PC-9 (cell line): ENCODE measurements at regions of chr9 and their contacts with region 1.

Region 1: DNA sequence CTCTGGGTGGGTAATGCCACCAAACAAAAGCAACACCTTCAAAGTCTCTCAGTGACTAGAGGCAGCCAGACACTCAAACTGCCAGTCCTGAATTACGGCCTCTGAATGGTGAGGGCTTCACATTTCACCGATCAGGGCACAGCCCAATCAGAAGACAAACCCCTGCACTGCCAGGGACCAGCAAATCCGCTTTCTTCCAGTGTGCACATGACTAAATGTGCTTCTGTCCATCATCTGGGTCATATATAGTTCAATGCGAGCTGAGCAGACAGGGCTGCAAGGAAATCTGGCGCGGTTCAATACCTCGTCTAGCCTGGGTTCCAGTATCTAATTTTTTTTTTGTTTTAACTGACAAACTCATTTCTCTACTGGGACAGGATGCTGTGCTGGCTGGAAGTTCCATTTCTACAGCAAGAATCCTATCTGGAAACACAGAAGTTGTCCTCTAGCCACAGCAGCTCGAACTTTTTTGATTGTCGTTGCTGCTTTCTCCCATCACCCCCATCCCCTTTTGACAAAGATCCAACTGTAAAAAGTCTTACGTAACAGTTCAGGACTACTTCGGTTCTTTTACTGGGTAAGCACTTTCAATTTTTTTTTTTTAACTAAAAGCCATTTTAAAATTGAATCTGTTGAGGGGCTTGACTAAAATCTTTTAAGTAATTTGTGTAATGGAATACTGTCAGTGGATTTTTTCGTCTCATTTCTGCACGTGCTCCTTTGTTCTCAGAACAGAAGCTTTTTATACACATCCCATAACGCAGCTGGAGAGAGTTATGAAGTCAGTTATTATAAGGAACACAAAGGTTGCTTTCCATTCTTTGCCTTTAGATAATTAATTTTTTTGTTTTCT is 112.7 kb downstream of the NR6A1 start:
- DNase-seq: peak; percentile 87 to 94
- H3K4me3 ChIP-seq: peak overlapping the region; percentile 70
- H3K27ac ChIP-seq: peak overlapping the region; percentile 94
- H3K4me1 ChIP-seq: peaks cover 41% of the 10 kb centered on the region
- H3K27me3 ChIP-seq: no peaks in the 10 kb centered on the region
- CTCF ChIP-seq: no peak

Region 2: GRCh38 chr9:124532897-124533296 is 125.5 kb before region 1 on chr9:
- CTCF ChIA-PET with region 1: no interaction called
- POLR2A ChIA-PET with region 1: no interaction called
- intact Hi-C with region 1: no loop called
- DNase-seq: no peak
- H3K4me3 ChIP-seq: no peak overlapping the region
- H3K27ac ChIP-seq: no peak overlapping the region
- H3K4me1 ChIP-seq: peaks cover 14% of the 10 kb centered on the region
- H3K27me3 ChIP-seq: no peaks in the 10 kb centered on the region
- CTCF ChIP-seq: no peak

Region 3: GRCh38 chr9:124551472-124552272 is 106.7 kb before region 1 on chr9:
- CTCF ChIA-PET with region 1: interaction called, 3 read pairs
- POLR2A ChIA-PET with region 1: no interaction called
- intact Hi-C with region 1: loop called (anchors 5 kb)
- DNase-seq: peak; percentile 71 to 78
- H3K4me3 ChIP-seq: no peak overlapping the region
- H3K27ac ChIP-seq: peak overlapping the region; percentile 45
- H3K4me1 ChIP-seq: peaks cover 23% of the 10 kb centered on the region
- H3K27me3 ChIP-seq: no peaks in the 10 kb centered on the region
- CTCF ChIP-seq: peak; percentile 78

Region 4: GRCh38 chr9:124580186-124580585 is 78.2 kb before region 1 on chr9:
- CTCF ChIA-PET with region 1: no interaction called
- POLR2A ChIA-PET with region 1: no interaction called
- intact Hi-C with region 1: no loop called
- DNase-seq: no peak
- H3K4me3 ChIP-seq: no peak overlapping the region
- H3K27ac ChIP-seq: no peak overlapping the region
- H3K4me1 ChIP-seq: no peaks in the 10 kb centered on the region
- H3K27me3 ChIP-seq: no peaks in the 10 kb centered on the region
- CTCF ChIP-seq: no peak

Region 5: DNA sequence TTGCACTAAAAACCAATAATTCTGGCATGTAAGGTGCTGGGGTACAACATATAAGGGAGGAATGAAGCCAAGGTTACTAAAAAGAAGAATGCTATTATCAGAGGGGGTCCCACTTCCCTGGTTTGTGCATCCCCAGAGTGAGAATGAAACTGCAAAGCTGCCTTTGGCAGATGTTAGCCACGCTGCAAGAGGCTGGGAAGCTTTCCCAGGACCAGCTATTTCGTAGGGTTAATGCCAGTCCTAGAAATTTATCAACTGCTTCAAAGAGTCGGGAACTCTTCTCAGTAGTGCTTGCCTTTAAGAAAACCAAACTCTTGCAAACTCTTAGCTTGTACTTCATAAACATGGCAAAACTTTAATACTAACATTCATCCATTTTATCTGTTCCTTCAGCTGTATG is 63.7 kb before region 1 on chr9:
- CTCF ChIA-PET with region 1: no interaction called
- POLR2A ChIA-PET with region 1: interaction called, 11 read pairs
- intact Hi-C with region 1: no loop called
- DNase-seq: no peak
- H3K4me3 ChIP-seq: no peak overlapping the region
- H3K27ac ChIP-seq: no peak overlapping the region
- H3K4me1 ChIP-seq: peaks cover 27% of the 10 kb centered on the region
- H3K27me3 ChIP-seq: no peaks in the 10 kb centered on the region
- CTCF ChIP-seq: no peak

Region 6: DNA sequence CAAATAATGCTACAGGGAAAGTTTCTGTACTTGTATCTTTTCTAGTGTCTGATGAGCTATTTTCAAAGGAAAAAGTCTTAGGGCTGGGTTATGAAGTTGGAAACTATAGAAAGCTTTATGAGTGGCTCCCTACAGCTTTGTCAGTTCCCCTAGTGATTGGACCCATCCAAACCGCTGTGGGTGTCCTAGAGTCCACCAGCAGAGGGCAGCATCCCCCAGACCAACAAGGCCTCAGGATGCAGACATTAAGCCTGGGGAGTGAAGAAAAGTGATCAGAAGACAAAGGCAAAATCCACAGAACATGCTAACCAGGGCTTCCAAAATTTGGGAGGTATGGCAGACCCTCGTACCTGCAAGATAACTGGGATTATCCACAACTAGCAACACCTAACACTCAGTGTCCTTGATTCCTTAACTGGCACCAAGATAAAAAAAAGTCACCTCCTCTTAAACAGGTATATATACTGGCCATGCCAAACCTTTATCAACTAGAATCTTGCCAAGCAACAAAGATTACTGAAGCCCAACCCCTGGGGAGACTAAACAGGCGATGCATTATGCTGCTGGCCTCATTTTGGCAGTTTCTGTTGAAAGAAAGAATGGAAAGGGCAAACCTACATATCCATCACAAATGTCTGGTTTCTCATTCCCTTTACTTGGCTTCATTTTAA is 40.8 kb before region 1 on chr9:
- CTCF ChIA-PET with region 1: interaction called, 12 read pairs
- POLR2A ChIA-PET with region 1: interaction called, 3 read pairs
- intact Hi-C with region 1: loop called (anchors 1 kb)
- DNase-seq: peak; percentile 60 to 80
- H3K4me3 ChIP-seq: no peak overlapping the region
- H3K27ac ChIP-seq: peak overlapping the region; percentile 38
- H3K4me1 ChIP-seq: peaks cover 19% of the 10 kb centered on the region
- H3K27me3 ChIP-seq: no peaks in the 10 kb centered on the region
- CTCF ChIP-seq: peak; percentile 91

Region 7: DNA sequence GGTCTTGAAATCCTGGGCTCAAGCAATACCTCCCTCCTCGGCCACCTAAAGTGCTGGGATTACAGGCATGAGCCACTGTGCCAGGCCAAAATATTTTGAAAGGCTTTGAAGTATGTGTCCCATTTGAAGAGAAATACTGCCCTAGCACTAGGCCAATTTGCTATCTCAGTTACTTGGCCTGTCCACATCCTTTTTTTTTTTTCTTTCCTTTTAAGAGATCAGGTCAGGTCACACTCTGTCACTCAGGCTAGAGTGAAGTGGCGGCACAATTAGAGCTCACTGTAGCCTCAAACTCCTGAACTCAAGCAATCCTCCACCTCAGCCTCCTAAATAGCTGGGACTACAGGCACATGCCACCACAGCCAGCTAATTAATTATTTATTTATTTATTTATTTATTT is 28.5 kb after region 1 on chr9:
- CTCF ChIA-PET with region 1: no interaction called
- POLR2A ChIA-PET with region 1: interaction called, 14 read pairs
- intact Hi-C with region 1: no loop called
- DNase-seq: no peak
- H3K4me3 ChIP-seq: no peak overlapping the region
- H3K27ac ChIP-seq: no peak overlapping the region
- H3K4me1 ChIP-seq: no peaks in the 10 kb centered on the region
- H3K27me3 ChIP-seq: no peaks in the 10 kb centered on the region
- CTCF ChIP-seq: no peak

Region 8: DNA sequence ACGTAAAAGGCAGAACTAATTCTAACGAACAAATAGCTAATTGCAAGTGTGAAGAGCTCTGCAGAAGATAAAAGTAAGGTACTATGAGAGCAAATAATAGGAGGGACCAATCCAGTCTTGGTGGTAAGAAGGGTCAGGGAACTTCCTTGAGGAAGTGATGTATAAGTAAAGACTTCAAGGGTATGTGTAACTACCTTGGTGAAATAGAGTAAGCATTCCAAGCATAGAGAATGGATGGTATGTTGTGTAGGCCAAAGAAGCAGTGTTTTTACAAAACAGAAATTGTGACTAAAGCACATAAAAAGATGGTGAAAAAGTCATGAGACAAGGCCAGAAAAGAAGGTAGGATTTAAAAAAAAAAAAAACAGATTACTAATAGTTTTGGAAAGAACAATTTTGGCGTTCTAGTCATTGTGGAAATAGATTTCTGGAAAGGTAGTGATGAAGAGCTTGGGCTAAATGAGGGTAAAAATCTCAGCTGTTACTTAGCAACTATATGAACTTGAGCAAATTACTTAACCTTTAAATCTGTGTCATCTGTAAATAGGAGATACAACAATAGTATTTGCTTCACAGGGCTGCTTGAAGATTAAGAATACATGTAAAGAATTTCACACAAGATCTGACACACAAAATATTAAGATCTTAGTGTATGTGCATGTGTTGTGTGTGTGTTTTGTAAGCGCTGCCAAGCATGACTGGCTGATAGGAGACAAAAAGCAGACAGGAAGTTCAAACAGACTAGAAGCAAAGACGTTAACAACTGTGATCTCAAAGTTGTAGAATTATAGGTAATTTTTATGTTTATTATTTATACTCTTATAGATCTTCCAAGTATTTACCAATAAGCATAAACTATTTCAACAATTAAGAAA is 39.2 kb after region 1 on chr9:
- CTCF ChIA-PET with region 1: no interaction called
- POLR2A ChIA-PET with region 1: interaction called, 3 read pairs
- intact Hi-C with region 1: loop called (anchors 1 kb)
- DNase-seq: peak in 1 of 2 experiments; percentile 81
- H3K4me3 ChIP-seq: no peak overlapping the region
- H3K27ac ChIP-seq: peak overlapping the region; percentile 81
- H3K4me1 ChIP-seq: peaks cover 58% of the 10 kb centered on the region
- H3K27me3 ChIP-seq: no peaks in the 10 kb centered on the region
- CTCF ChIP-seq: no peak

Region 9: DNA sequence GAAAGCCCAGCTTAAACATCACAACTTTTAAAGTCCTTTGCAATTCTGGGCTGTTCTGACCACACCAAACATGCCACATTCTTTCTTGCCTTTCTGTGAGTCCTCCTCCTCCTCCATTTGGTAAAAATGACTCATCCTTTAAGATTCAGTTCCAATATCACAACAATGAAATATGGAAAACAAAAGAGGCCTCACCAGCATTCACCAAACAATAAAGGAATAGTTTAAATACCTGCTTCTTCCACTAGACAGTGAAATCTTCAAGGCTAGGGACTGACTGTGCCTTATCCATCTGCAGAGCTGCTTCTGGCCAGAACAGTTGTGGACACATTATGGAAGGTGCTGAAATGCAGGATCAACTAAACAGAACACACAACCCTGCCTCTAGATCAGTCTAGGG is 76.7 kb after region 1 on chr9:
- CTCF ChIA-PET with region 1: interaction called, 5 read pairs
- POLR2A ChIA-PET with region 1: interaction called, 9 read pairs
- intact Hi-C with region 1: loop called (anchors 1 kb)
- DNase-seq: peak; percentile 45 to 89
- H3K4me3 ChIP-seq: no peak overlapping the region
- H3K27ac ChIP-seq: peak overlapping the region; percentile 80
- H3K4me1 ChIP-seq: peaks cover 34% of the 10 kb centered on the region
- H3K27me3 ChIP-seq: no peaks in the 10 kb centered on the region
- CTCF ChIP-seq: no peak